Heart right ventricle (tissue), 16 donors: ENCODE measurements at regions of chr21 and their contacts with region 1.

Region 1: DNA sequence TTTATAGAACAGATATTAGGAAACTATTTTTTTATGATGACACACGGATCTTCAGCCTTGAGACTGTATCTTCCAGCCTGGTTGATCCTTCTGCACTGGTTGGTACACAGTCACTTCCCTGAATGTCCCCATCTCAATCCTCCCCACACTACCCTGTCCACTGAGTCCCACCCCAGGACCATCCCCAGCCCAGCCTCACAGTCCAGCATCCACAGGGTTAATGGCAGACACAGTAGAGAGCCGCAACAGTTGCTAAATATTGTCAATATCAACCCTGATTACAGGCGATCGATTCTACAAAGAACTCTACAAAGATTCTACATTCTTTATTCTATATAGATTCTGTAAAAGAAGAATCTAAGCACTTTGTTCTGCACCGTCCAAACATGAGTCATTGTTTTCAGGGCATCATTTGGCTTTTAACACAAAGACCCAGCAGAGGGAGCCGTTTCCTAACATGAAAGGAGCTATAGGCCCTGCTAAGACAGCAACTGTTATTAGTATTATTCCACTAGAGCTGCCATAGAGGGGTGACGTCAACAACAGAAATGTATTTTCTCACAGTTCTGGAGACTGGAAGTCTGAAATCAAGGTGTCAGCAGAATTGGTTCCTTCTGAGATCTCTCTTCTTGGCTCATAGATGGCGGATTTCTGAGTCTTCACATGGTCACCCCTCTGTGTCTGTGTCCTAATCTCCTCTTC is 30.1 kb upstream of the IFNAR2 start:
- DNase-seq: peak in 1 of 2 donors; percentile 90
- ATAC-seq: peak; percentile 64 to 89 (median 82)
- H3K4me3 ChIP-seq: no peak overlapping the region
- H3K27ac ChIP-seq: peak overlapping the region in 9 of 10 donors; percentile 53 to 84 (median 79)
- H3K4me1 ChIP-seq: peaks cover 6 to 60% (median 38%) of the 10 kb centered on the region in 9 donors
- H3K27me3 ChIP-seq: no peaks in the 10 kb centered on the region
- CTCF ChIP-seq: peak; percentile 80 to 91 (median 84)

Region 2: DNA sequence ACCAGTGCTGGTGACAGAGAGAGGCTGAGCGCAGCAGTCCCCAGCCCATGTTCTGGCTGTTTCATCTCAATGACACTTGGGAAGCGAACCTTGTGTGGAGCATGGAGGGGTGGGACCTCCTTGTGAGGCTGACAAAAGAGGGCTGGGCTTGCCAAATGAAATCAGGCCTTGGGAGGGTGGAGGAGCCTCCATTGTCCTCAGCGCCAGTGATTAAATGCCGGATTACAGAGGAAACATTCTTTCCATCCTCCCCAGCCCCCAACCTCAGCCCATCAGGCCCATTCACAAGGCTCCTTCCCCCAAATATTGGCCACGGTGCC is 364.8 kb before region 1 on chr21:
- intact Hi-C with region 1: loop called in 9 of 10 experiments (anchors 5 to 10 kb)
- DNase-seq: no peak
- ATAC-seq: no peak
- H3K4me3 ChIP-seq: no peak overlapping the region
- H3K27ac ChIP-seq: no peak overlapping the region
- H3K4me1 ChIP-seq: peaks cover 0 to 5% (median 0%) of the 10 kb centered on the region in 9 donors
- H3K27me3 ChIP-seq: peaks cover 0 to 6% (median 0%) of the 10 kb centered on the region in 7 donors
- CTCF ChIP-seq: no peak

Region 3: GRCh38 chr21:32994305-32994704 is 205.4 kb before region 1 on chr21:
- intact Hi-C with region 1: loop called in 7 of 10 experiments (anchors 2 to 10 kb)
- DNase-seq: no peak
- ATAC-seq: no peak
- H3K4me3 ChIP-seq: no peak overlapping the region
- H3K27ac ChIP-seq: no peak overlapping the region
- H3K4me1 ChIP-seq: no peaks in the 10 kb centered on the region
- H3K27me3 ChIP-seq: peaks cover 0 to 32% (median 16%) of the 10 kb centered on the region in 7 donors
- CTCF ChIP-seq: peak in 7 of 9 donors; percentile 8 to 57 (median 46)

Region 4: DNA sequence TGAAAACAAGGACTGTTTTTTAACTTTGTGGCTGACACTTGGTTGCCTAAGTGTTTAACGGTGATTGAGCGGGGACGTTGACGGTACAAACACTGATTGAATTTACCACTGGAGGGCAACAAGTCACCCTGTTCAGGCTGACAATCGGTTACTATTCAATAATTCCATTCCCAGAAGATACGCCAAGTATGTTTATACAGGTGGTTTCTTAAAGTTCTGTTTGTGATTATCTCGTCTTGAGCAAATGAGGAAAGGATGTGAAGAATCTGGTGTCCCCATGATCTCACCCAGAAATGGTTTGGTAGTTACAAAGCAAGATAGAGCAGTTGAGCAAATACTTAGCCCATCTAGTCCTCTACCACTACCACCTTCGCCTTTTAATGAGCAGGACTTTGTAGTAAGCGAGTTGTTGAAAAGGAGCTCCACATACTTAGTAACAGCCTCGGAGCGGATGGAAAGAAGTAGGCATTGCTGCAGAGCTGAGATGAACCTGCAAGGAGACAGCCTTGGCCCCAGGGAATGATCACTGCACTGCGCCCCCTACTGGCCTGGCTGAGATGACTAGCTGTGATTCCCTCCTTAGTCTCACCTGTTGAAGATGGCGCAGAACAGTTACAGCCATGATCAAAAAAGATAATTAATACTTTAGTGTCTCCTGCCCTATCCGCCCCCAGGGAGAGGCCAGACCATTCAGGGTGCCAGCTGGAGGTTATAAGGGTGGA is 161.4 kb after region 1 on chr21:
- intact Hi-C with region 1: loop called in 1 of 10 experiments (anchors 1 kb)
- DNase-seq: peak; percentile 77 to 82
- ATAC-seq: peak; percentile 81 to 92 (median 86)
- H3K4me3 ChIP-seq: peak overlapping the region in 9 of 10 donors; percentile 7 to 50 (median 44)
- H3K27ac ChIP-seq: peak overlapping the region in 9 of 10 donors; percentile 43 to 89 (median 60)
- H3K4me1 ChIP-seq: peaks cover 0 to 54% (median 23%) of the 10 kb centered on the region in 9 donors
- H3K27me3 ChIP-seq: no peaks in the 10 kb centered on the region
- CTCF ChIP-seq: peak; percentile 72 to 87 (median 84)

Region 5: DNA sequence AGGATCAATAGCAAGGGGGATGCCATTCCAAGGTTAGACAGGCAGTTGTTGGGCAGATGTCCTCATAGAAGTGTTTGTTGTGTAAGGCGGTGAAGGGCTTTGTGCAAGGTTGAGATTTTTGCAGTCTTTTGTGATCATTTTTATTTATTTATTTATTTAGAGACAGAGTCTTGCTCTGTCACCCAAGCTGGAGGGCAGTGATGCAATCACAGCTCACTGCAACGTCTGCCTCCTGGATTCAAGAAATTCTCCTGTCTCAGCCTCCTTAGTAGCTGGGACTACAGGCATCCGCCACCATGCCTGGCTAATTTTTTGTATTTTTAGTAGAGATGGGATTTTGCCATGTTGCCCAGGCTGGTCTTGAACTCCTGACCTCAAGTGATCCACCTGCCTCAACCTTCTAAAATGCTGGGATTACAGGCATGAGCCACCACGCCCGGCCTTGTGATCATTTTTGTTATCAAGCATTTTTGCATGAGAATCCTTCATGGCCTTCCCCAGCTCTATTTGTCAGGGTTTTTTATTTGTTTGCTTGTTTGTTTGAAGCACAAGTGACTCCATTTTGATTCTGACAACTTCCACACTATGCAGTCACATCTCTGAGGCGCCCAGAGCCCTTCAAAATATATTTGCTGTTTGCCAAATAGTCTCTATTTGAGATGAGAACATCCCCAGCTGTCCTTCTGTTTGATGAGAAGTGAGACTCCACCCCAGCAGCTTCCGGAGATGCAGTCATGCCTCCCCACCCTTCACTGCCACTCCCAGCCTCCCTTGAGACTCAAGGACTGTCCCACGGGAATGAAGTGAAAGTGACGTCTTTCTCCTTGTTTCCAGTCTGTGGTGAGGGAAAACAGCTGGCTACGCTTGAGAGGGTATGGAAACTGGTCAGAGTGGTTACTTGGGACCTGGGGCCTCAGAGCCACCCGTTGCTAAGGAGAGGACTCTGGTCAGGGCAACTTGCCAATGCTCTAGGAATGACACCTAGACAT is 242.1 kb after region 1 on chr21:
- intact Hi-C with region 1: loop called (anchors 1 to 5 kb)
- DNase-seq: peak; percentile 37 to 85
- ATAC-seq: peak; percentile 46 to 83 (median 73)
- H3K4me3 ChIP-seq: no peak overlapping the region
- H3K27ac ChIP-seq: peak overlapping the region in 8 of 10 donors; percentile 8 to 74 (median 57)
- H3K4me1 ChIP-seq: peaks cover 0 to 34% (median 20%) of the 10 kb centered on the region in 9 donors
- H3K27me3 ChIP-seq: no peaks in the 10 kb centered on the region
- CTCF ChIP-seq: no peak

Region 6: DNA sequence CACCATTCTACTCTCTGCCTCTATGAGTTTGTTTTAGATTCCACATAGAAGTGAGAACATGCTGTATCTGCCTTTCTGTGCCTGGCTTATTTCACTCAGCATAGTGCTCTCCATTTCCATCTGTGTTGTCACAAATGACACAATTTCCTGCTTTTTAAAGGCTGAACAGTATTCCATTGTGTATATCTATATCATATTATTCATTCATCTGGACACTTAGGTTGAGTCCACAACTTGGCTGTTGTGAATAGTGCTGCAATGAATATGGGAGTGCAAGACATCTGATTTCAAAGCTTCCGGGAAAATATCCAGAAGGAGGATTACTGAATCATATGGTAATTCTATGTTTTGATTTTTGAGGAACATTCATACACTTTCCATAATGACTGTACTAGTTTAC is 408.9 kb after region 1 on chr21:
- intact Hi-C with region 1: loop called in 1 of 10 experiments (anchors 5 kb)
- DNase-seq: no peak
- ATAC-seq: no peak
- H3K4me3 ChIP-seq: no peak overlapping the region
- H3K27ac ChIP-seq: no peak overlapping the region
- H3K4me1 ChIP-seq: no peaks in the 10 kb centered on the region
- H3K27me3 ChIP-seq: no peaks in the 10 kb centered on the region
- CTCF ChIP-seq: no peak